ENCODE measurements at regions of chr12 and their contacts with region 1.

Region 1: GRCh38 chr12:123269384-123269892 is 2.2 kb downstream of the CDK2AP1 start:
- DNase-seq: peak; percentile 63
- H3K4me3 ChIP-seq: peak overlapping the region; percentile 66 to 96 (median 73)
- H3K27ac ChIP-seq: peak overlapping the region; percentile 75 to 87 (median 80)
- H3K4me1 ChIP-seq: peaks cover 3 to 31% (median 30%) of the 10 kb centered on the region in 4 donors
- H3K27me3 ChIP-seq: no peaks in the 10 kb centered on the region
- CTCF ChIP-seq: peak in 2 of 5 experiments; percentile 18 to 29
- EP300 ChIP-seq: no peak
- POLR2A ChIP-seq: no peak

Region 2: GRCh38 chr12:123365025-123365917 is 95.8 kb after region 1 on chr12:
- in situ Hi-C with region 1: loop called in 1 of 4 experiments (anchors 10 kb)
- intact Hi-C with region 1: no loop called
- DNase-seq: peak; percentile 99
- H3K4me3 ChIP-seq: peak overlapping the region; percentile 81 to 87 (median 83)
- H3K27ac ChIP-seq: peak overlapping the region; percentile 93 to 98 (median 96)
- H3K4me1 ChIP-seq: peaks cover 4 to 33% (median 14%) of the 10 kb centered on the region in 4 donors
- H3K27me3 ChIP-seq: no peaks in the 10 kb centered on the region
- CTCF ChIP-seq: peak; percentile 65 to 92 (median 76)
- EP300 ChIP-seq: no peak
- POLR2A ChIP-seq: peak; percentile 68

Measured in transverse colon (tissue), 4 donors.